Activated CD8-positive, alpha-beta T cell treated with anti-CD3 and anti-CD28 coated beads for 36 hours (primary cell): ENCODE measurements at regions of chr10 and their contacts with region 1.

Region 1: DNA sequence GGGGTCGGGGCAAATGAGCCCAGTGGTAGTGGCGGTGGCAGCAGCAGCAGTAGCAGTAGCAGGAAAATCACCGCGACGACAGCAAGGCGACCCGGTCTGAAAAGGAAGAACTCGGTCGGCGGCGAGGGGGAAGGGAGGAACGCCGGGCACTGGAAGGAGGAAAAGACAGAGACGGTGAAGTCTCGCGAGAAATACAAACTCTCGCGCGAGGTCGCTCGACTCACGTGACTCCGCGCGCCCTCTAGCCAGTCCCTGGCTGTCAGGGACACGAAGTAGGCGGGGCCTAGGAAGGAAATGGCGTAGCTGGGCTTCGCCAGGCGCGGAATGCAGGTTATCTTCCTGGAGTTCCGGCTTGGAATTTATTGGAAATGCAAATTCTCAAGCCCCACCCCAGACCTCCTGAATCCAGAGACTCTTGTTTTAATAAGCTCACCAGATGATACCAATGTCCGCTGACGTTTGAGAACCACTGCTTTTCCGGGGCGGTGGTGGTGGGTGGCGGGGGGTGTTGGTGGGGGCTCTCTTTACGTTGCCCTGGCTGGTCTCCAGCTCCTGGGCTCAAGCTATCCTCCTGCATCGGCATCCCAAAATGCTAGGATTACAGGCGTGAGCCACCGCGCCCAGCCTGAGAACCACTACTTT is at the start of gene SMNDC1:
- DNase-seq: peak; percentile 98
- ATAC-seq: peak; percentile 93
- H3K4me3 Mint-ChIP-seq: peak within 1 kb of the TSS; percentile 93
- H3K27ac Mint-ChIP-seq: peak within 1 kb of the TSS; percentile 98
- H3K4me1 Mint-ChIP-seq: peaks cover 43% of the 10 kb centered on the region
- H3K27me3 Mint-ChIP-seq: no peaks in the 10 kb centered on the region
- CTCF ChIP-seq: no peak
- total RNA-seq, gene SMNDC1: 39.7 to 42.4 TPM

Region 2: GRCh38 chr10:110218632-110219031 is 86.3 kb before region 1 on chr10:
- CTCF ChIA-PET with region 1: no interaction called
- POLR2A ChIA-PET with region 1: no interaction called
- intact Hi-C with region 1: no loop called
- DNase-seq: no peak
- ATAC-seq: no peak
- H3K4me3 Mint-ChIP-seq: no peak overlapping the region
- H3K27ac Mint-ChIP-seq: no peak overlapping the region
- H3K4me1 Mint-ChIP-seq: peaks cover 33% of the 10 kb centered on the region
- H3K27me3 Mint-ChIP-seq: peaks cover 4% of the 10 kb centered on the region
- CTCF ChIP-seq: no peak

Region 3: GRCh38 chr10:110354322-110354766 is 49.4 kb after region 1 on chr10:
- CTCF ChIA-PET with region 1: interaction called, 14 read pairs
- POLR2A ChIA-PET with region 1: no interaction called
- intact Hi-C with region 1: no loop called
- DNase-seq: peak; percentile 95
- ATAC-seq: peak; percentile 40
- H3K4me3 Mint-ChIP-seq: no peak overlapping the region
- H3K27ac Mint-ChIP-seq: peak overlapping the region; percentile 87
- H3K4me1 Mint-ChIP-seq: peaks cover 60% of the 10 kb centered on the region
- H3K27me3 Mint-ChIP-seq: peaks cover 2% of the 10 kb centered on the region
- CTCF ChIP-seq: peak; percentile 90

Region 4: DNA sequence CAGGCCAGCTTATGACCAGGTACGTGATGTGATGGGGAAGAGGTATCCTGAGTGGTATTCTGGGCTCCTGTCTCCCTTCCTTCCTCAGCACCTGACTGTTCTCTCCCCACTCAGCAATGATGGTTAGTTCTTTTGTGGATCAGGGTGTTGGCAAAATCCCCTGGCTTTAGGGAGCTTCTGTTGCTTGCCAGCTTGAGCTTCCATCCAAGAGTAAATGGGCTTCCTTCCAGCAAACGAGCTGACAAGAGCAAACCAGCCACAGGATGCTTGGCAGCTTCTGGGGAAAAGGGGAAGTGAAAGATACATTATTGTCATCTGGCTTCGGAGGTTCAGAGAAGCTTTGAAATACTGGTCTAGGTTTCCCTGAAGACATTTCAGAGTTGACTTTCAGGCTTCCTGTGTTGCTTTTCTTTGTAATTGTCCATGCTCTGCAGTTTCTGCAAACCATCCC is 198.0 kb after region 1 on chr10:
- CTCF ChIA-PET with region 1: interaction called, 37 read pairs
- POLR2A ChIA-PET with region 1: interaction called, 5 read pairs
- intact Hi-C with region 1: loop called (anchors 5 kb)
- DNase-seq: no peak
- ATAC-seq: no peak
- H3K4me3 Mint-ChIP-seq: peak overlapping the region; percentile 99
- H3K27ac Mint-ChIP-seq: peak overlapping the region; percentile 91
- H3K4me1 Mint-ChIP-seq: peaks cover 76% of the 10 kb centered on the region
- H3K27me3 Mint-ChIP-seq: no peaks in the 10 kb centered on the region
- CTCF ChIP-seq: no peak

Region 5: GRCh38 chr10:110567201-110568054 is 262.5 kb after region 1 on chr10 and contains the start of gene SMC3:
- CTCF ChIA-PET with region 1: interaction called, 8 read pairs
- POLR2A ChIA-PET with region 1: interaction called, 11 read pairs
- intact Hi-C with region 1: no loop called
- DNase-seq: peak; percentile 93
- ATAC-seq: peak; percentile 86
- H3K4me3 Mint-ChIP-seq: peak within 1 kb of the TSS; percentile 98
- H3K27ac Mint-ChIP-seq: peak within 1 kb of the TSS; percentile 99
- H3K4me1 Mint-ChIP-seq: peaks cover 32% of the 10 kb centered on the region
- H3K27me3 Mint-ChIP-seq: peaks cover 20% of the 10 kb centered on the region
- CTCF ChIP-seq: no peak
- total RNA-seq, gene SMC3: 69.7 to 71.2 TPM

Region 6: DNA sequence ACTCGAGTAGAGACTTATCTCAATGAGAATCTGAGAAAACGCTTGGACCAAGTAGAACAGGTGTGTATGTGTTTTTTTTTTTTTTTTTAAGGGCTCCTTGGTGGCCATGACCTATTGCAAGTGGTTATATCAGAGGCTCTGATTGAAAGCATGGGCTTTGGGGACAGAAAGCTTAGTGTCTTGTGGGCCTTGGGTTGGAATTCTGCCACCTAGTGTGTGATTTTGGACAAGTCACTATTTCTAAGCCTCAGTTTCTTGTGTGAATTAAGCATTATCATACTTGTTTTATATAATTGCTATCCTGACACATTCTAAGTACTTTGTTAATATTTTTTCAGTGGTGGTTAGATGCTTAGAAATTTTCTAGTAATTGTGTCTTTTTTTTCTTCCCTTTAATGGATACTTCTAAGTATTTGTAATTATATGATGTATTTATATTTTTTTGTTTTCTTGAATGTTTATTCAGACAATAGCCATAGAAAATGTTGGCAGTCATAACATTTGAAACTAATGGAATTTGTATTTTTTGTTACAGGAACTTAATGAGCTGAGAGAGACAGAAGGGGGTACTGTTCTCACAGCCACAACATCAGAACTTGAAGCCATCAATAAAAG is 295.7 kb after region 1 on chr10:
- CTCF ChIA-PET with region 1: interaction called, 27 read pairs
- POLR2A ChIA-PET with region 1: interaction called, 3 read pairs
- intact Hi-C with region 1: loop called (anchors 5 kb)
- DNase-seq: peak; percentile 38
- ATAC-seq: peak; percentile 80
- H3K4me3 Mint-ChIP-seq: no peak overlapping the region
- H3K27ac Mint-ChIP-seq: no peak overlapping the region
- H3K4me1 Mint-ChIP-seq: no peaks in the 10 kb centered on the region
- H3K27me3 Mint-ChIP-seq: no peaks in the 10 kb centered on the region
- CTCF ChIP-seq: peak; percentile 69

Region 7: DNA sequence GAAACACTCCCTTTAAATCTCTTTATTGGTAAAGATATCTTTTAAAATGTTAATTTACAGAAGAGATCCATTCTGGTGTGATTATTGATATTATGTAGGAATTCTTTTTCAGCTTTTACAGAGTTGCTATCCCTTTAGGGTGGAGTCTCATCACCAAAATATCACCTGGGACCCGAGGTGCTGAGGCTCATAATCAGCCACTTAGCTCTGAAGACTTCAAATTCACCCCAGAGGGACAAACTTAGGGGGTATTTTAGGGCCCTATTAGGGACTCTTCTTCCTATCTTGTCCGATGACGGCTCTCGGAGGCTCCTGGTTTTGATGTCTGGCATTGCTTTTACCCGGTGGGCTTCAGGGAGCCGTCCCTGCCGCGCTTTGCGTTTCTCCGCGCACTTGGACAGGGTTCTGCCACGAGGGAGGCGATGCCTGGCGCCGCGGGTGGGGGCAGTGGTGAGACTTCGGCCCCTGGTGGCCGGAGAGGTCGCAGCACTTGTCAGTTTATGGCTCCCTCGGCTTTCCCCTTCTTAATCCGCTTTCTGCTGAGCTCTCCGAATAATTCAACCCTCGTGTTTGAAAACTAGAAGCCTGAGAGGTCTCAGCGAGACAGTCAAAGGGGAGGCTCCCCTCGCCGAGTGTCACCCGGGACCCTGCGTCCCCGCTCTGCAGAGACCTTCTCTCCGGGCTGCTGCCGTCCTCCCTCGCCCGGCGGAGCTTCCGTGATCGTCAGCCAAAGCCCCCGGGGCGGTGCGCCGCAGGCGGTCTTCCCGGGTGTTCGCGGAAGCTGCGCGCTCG is 367.1 kb after region 1 on chr10:
- CTCF ChIA-PET with region 1: interaction called, 10 read pairs
- POLR2A ChIA-PET with region 1: no interaction called
- intact Hi-C with region 1: no loop called
- DNase-seq: peak; percentile 82
- ATAC-seq: peak; percentile 97
- H3K4me3 Mint-ChIP-seq: peak overlapping the region; percentile 80
- H3K27ac Mint-ChIP-seq: peak overlapping the region; percentile 82
- H3K4me1 Mint-ChIP-seq: peaks cover 4% of the 10 kb centered on the region
- H3K27me3 Mint-ChIP-seq: peaks cover 3% of the 10 kb centered on the region
- CTCF ChIP-seq: peak; percentile 83

Region 8: GRCh38 chr10:111030042-111030750 is 725.3 kb after region 1 on chr10:
- CTCF ChIA-PET with region 1: no interaction called
- POLR2A ChIA-PET with region 1: no interaction called
- intact Hi-C with region 1: no loop called
- DNase-seq: no peak
- ATAC-seq: peak; percentile 90
- H3K4me3 Mint-ChIP-seq: no peak overlapping the region
- H3K27ac Mint-ChIP-seq: no peak overlapping the region
- H3K4me1 Mint-ChIP-seq: peaks cover 8% of the 10 kb centered on the region
- H3K27me3 Mint-ChIP-seq: no peaks in the 10 kb centered on the region
- CTCF ChIP-seq: no peak